ENCODE measurements at regions of chr21 and their contacts with region 1.

Region 1: GRCh38 chr21:42705746-42706374 is 52.4 kb downstream of the PDE9A start:
- DNase-seq: no peak
- ATAC-seq: peak; percentile 70
- H3K4me3 ChIP-seq: no peak overlapping the region
- H3K27ac ChIP-seq: no peak overlapping the region
- H3K4me1 ChIP-seq: no peaks in the 10 kb centered on the region
- H3K27me3 ChIP-seq: peaks cover 51 to 57% of the 10 kb centered on the region in 2 experiments
- CTCF ChIP-seq: peak in 1 of 3 experiments; percentile 25; a peak in 1 of 6 replicates
- EP300 ChIP-seq: no peak
- POLR2A ChIP-seq: no peak
- RAD21 ChIP-seq: no peak

Region 2: DNA sequence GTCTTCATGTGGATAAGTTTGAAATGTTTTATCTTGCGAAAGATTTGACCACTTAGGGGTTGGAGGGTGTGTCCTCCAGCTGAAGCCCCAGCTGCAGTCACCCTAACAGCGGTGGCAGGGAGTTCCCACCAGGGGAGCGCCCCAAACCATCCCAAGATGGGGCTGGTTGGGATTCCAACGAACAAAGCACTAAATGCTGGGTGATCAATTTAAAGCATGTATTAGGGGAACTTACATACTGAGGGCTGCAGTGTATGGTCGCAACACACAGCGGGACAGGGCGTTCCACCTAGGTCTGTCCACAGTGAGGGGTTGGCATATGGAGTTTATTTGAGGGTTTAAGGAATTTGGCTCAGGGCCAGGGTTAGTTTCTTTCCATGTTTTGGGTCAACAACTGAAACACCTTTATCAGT is 165.9 kb before region 1 on chr21:
- CTCF ChIA-PET with region 1: no interaction called
- POLR2A ChIA-PET with region 1: no interaction called
- in situ Hi-C with region 1: no loop called
- intact Hi-C with region 1: no loop called
- DNase-seq: peak; percentile 60 to 81 (median 71)
- ATAC-seq: peak; percentile 90
- H3K4me3 ChIP-seq: no peak overlapping the region
- H3K27ac ChIP-seq: no peak overlapping the region
- H3K4me1 ChIP-seq: peaks cover 23 to 28% of the 10 kb centered on the region in 2 experiments
- H3K27me3 ChIP-seq: peaks cover 25 to 40% of the 10 kb centered on the region in 2 experiments
- CTCF ChIP-seq: peak; percentile 79 to 96 (median 87)
- EP300 ChIP-seq: no peak
- POLR2A ChIP-seq: no peak
- RAD21 ChIP-seq: peak; percentile 92 to 96

Region 3: GRCh38 chr21:42556960-42557359 is 148.9 kb before region 1 on chr21:
- CTCF ChIA-PET with region 1: no interaction called
- POLR2A ChIA-PET with region 1: no interaction called
- in situ Hi-C with region 1: no loop called
- intact Hi-C with region 1: no loop called
- DNase-seq: no peak
- ATAC-seq: no peak
- H3K4me3 ChIP-seq: no peak overlapping the region
- H3K27ac ChIP-seq: no peak overlapping the region
- H3K4me1 ChIP-seq: peaks cover 27 to 29% of the 10 kb centered on the region in 2 experiments
- H3K27me3 ChIP-seq: peaks cover 2 to 4% of the 10 kb centered on the region in 2 experiments; a peak in 3 of 5 replicates
- CTCF ChIP-seq: no peak
- EP300 ChIP-seq: no peak
- POLR2A ChIP-seq: no peak
- RAD21 ChIP-seq: no peak

Region 4: DNA sequence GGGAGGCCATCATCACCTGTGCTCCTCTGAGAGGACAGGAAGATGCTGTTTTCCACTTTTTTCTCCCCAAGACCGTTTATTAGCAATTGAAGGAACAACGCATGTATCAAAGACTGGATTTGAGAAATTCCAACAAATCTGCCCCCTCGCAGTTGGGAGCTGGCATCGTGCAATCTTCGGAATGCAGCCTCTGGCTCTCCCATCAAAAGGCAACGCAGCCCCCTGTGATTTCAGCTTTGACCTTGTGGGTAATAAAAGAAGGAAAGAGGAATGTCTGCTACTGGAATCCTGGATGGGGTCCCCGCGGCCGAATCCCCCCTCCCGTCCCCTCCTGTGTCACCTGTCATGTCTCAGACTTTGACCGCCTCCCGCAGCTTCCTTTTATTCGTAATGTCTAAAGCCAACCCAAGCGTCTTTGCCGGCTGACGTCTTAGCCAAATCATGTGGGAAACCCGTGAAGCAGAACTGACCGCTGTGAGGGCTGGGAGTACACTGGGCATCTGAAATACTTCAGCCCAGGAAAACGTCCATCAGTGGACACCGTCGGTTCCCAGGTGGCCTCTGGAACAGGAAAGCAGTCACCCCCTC is 72.0 kb after region 1 on chr21:
- CTCF ChIA-PET with region 1: no interaction called
- POLR2A ChIA-PET with region 1: no interaction called
- in situ Hi-C with region 1: no loop called
- intact Hi-C with region 1: loop called (anchors 10 kb)
- DNase-seq: no peak
- ATAC-seq: no peak
- H3K4me3 ChIP-seq: no peak overlapping the region
- H3K27ac ChIP-seq: no peak overlapping the region
- H3K4me1 ChIP-seq: peaks cover 0 to 13% of the 10 kb centered on the region in 2 experiments; a peak in 2 of 5 replicates
- H3K27me3 ChIP-seq: peaks cover 65 to 81% of the 10 kb centered on the region in 2 experiments
- CTCF ChIP-seq: no peak
- EP300 ChIP-seq: no peak
- POLR2A ChIP-seq: no peak
- RAD21 ChIP-seq: no peak

Measured in K562 (cell line).